ENCODE measurements at regions of chr20 and their contacts with region 1.

Region 1: DNA sequence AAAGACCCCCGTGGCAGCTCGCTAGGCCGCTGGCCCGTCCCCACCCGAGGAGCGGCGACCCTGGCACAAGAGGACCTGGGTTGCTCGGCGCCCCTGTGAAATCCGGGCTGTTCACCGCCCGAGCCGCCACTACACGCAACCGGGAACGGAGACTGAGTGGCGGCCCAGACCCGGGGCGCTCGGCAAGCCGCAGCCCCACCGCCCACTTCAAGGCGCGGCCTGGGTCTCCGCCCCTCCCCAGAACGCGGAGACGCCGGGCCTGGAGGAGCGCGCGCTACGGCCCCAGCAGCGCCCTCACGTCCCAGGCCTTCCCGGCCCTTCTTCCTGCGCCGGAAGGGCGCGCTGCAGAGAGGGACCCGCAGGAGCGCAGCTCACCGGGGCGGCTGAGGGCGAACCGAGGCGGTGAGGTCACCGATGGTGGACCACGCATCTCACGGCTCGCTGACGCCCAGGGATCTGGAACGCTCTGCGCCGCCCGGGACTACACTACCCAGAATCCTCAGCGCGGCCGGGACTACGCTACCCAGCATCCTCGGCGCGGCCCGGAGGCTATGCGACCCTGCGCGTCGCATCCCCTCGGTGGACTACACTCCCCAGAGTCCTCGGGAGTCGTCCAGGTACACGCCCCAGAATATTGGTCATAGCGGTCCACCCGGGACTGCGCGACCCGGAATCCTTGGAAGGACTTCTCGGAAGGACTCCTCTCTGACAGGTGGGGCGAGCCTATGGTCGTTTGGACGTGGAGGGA is at the start of gene ZNF337:
- DNase-seq: peak; percentile 90 to 98 (median 94)
- H3K4me3 ChIP-seq: peak within 1 kb of the TSS; percentile 70 to 98 (median 89)
- H3K27ac ChIP-seq: peak within 1 kb of the TSS; percentile 10 to 99 (median 92)
- H3K27me3 ChIP-seq: no peaks in the 10 kb centered on the region
- CTCF ChIP-seq: peak in 42 of 56 donors; percentile 6 to 62 (median 39)
- total RNA-seq, gene ZNF337: 18.1 to 47.1 (median 27.5) TPM

Region 2: DNA sequence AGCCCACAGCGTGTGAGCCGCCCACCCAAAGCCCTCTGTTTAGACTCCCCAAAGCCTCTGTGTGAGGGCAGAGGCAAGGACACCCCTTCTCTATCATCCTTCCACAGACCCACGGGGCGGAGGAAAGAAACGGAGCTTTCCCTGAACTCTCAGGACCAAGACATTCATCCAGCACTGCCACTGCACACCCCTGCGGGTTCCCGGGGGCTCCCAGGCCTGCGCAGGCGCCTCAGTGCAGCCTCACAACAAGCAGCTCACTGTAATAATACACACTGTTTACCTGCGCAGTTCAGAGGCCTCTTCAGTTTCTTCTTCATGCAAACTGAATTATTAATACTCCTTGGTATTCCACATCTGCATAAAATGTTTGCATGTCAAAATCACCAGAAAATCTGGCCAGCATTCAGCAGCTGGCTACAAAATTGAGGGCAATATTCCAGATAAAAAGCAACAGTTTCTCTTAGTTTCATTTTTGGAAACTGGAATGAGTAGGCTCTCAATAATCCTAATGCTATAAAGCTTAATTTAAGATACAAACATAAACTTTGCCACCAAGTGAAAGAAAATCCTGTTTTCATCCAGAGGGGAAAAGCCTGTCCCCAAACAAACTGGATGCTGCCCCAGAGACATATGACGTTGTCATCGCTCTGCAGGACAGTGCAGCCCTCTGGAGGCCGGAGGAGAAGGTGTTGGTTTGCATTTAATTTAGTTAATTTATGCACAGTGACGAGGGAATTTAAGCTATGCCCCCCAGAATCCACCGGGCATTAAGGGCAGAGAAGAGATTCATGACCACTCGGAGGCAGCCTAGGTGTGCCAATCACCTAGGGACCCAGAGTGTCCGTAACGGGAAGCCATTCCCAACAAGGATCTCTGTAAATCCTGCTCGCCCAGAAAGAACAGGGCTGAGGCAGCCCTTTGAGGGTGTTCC is 156.6 kb before region 1 on chr20:
- intact Hi-C with region 1: loop called in 1 of 2 experiments (anchors 10 kb)
- DNase-seq: peak in 8 of 10 donors; percentile 39 to 71 (median 60)
- H3K4me3 ChIP-seq: peak overlapping the region; percentile 31 to 69 (median 54)
- H3K27ac ChIP-seq: peak overlapping the region in 52 of 59 donors; percentile 1 to 86 (median 64)
- H3K27me3 ChIP-seq: no peaks in the 10 kb centered on the region
- CTCF ChIP-seq: peak; percentile 36 to 77 (median 60)

Region 3: DNA sequence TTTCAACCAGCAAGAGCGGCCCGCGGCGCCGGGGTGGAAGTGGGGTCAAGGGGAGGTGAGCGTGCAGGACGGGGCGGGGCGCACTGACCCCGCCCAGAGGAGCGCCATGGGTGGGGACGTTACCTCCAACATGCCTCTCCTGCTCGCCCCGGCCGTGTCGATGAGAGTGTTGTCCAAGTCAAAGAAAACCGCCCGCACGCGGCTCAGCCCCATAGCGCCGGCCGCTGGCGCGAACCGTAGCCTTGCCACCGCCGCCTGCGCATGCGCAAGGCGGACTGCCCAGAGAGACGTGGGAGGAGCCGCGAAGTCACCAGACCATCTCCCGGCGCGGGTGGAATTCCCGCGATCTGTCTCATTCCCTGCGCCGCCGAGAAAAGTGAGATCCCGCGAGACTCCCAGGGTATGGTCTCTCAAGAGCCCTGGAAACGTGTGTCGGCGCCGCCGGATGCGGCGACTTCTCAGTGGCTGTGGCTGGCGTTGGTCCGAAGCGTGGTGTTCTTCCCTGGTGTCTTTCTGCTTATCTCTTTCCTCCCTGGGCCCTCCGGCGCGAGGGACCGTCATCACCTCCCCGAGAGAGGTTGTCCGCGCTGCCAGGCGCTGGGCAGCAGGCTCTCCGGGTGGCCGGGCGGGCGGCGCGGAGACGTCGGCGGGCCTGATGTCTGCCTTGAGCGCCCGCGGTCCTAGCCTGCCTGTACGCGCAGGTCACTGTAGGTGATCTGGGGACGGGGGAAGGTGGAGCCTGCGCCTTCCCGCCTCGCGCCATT is 72.6 kb before region 1 on chr20 and contains the start of gene NANP:
- intact Hi-C with region 1: loop called (anchors 2 to 5 kb)
- DNase-seq: peak; percentile 84 to 97 (median 92)
- H3K4me3 ChIP-seq: peak within 1 kb of the TSS; percentile 65 to 99 (median 92)
- H3K27ac ChIP-seq: peak within 1 kb of the TSS; percentile 13 to 95 (median 85)
- H3K27me3 ChIP-seq: no peaks in the 10 kb centered on the region
- CTCF ChIP-seq: peak in 45 of 56 donors; percentile 8 to 63 (median 35)
- total RNA-seq, gene NANP: 1.2 to 4.5 (median 2.9) TPM

Region 4: GRCh38 chr20:25629816-25630499 is 66.6 kb before region 1 on chr20:
- intact Hi-C with region 1: loop called in 1 of 2 experiments (anchors 5 kb)
- DNase-seq: no peak
- H3K4me3 ChIP-seq: no peak overlapping the region
- H3K27ac ChIP-seq: no peak overlapping the region
- H3K27me3 ChIP-seq: no peaks in the 10 kb centered on the region
- CTCF ChIP-seq: no peak

Region 5: GRCh38 chr20:25643716-25644115 is 52.8 kb before region 1 on chr20:
- intact Hi-C with region 1: no loop called
- DNase-seq: no peak
- H3K4me3 ChIP-seq: no peak overlapping the region
- H3K27ac ChIP-seq: no peak overlapping the region
- H3K27me3 ChIP-seq: no peaks in the 10 kb centered on the region
- CTCF ChIP-seq: no peak

Region 6: DNA sequence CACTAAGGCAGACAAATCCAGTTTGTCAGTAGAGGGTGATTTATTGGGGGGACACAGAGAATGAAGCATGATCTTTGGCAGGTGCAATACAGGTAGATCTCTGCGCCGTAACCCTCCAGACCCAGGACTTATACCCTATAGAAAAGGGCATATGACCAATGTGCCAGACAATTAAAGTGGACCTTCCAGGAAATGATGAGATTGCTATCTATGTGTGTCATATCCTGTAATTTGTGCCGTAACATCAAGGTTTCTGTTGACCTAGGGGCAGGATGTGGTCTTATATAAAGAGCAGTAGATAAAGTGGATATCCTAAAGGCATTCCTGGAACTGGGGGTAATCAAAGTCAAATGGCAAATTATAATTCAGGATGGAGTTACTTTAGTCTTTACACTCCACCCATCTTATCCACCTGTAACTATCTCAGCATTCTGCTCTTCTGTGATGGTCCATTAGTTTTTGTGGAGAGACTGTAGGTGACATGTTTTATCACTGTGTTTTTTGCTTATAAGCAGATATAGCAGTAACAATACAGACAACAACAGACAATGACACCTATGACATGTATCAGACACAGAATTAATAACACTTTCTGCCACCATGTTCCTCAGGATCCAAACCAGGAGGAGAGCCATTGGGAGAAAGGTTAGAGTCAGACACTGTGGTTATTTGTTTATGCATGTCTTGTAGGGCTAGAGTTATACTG is 43.2 kb after region 1 on chr20:
- intact Hi-C with region 1: no loop called
- DNase-seq: no peak
- H3K4me3 ChIP-seq: no peak overlapping the region
- H3K27ac ChIP-seq: no peak overlapping the region
- H3K27me3 ChIP-seq: no peaks in the 10 kb centered on the region
- CTCF ChIP-seq: no peak

Region 7: GRCh38 chr20:25865380-25866118 is 169.0 kb after region 1 on chr20:
- intact Hi-C with region 1: loop called in 1 of 2 experiments (anchors 2 kb)
- DNase-seq: peak; percentile 79 to 90 (median 86)
- H3K4me3 ChIP-seq: peak overlapping the region; percentile 29 to 76 (median 60)
- H3K27ac ChIP-seq: peak overlapping the region in 50 of 59 donors; percentile 10 to 87 (median 67)
- H3K27me3 ChIP-seq: no peaks in the 10 kb centered on the region
- CTCF ChIP-seq: peak in 10 of 56 donors; percentile 10 to 38 (median 18)

Measured in dorsolateral prefrontal cortex (tissue), 120 donors.